ENCODE measurements at regions of chr9 and their contacts with region 1.

Region 1: DNA sequence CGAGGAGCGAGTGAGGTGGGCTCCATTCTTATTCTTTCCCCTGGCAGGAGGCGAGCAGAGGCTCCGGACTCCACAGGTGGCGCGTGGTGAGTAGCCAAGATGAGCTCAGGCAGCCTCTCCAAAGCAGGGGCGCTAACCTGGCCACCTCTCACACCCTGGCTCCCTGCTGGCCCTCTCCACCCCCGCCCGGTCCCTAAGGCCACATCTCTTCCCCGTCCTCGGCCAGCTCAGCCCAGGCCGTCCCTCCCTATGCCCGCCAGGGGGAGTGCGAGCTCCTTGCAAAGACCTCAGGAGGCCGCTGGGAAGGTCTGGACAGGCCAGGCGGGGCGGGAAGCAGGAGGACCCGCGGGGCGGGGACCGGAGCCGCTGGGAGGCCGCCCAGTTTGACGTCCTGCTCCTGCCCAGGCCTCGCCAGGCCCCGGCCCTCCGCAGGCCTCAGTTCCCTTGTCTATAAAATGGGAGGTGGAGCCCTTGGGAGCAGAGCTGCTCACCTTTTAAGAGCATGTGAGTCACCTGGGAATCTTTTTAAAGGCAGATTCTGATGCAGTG is 46.3 kb upstream of the GGTA1 start:
- DNase-seq: peak; percentile 94 to 99 (median 96)
- ATAC-seq: peak; percentile 97 to 98 (median 97)
- H3K4me3 ChIP-seq: peak overlapping the region in 2 of 4 donors; percentile 10 to 29
- H3K27ac ChIP-seq: no peak overlapping the region
- H3K4me1 ChIP-seq: peaks cover 0 to 7% (median 0%) of the 10 kb centered on the region in 3 donors
- H3K27me3 ChIP-seq: no peaks in the 10 kb centered on the region
- CTCF ChIP-seq: peak; percentile 92 to 95 (median 93)

Region 2: GRCh38 chr9:121483049-121483448 is 62.9 kb before region 1 on chr9:
- intact Hi-C with region 1: loop called in 1 of 3 experiments (anchors 10 kb)
- DNase-seq: no peak
- ATAC-seq: no peak
- H3K4me3 ChIP-seq: no peak overlapping the region
- H3K27ac ChIP-seq: no peak overlapping the region
- H3K4me1 ChIP-seq: no peaks in the 10 kb centered on the region
- H3K27me3 ChIP-seq: no peaks in the 10 kb centered on the region
- CTCF ChIP-seq: no peak

Region 3: GRCh38 chr9:121674952-121675351 is 129.0 kb after region 1 on chr9:
- intact Hi-C with region 1: loop called in 1 of 3 experiments (anchors 10 kb)
- DNase-seq: no peak
- ATAC-seq: no peak
- H3K4me3 ChIP-seq: no peak overlapping the region
- H3K27ac ChIP-seq: no peak overlapping the region
- H3K4me1 ChIP-seq: no peaks in the 10 kb centered on the region
- H3K27me3 ChIP-seq: no peaks in the 10 kb centered on the region
- CTCF ChIP-seq: no peak

Region 4: DNA sequence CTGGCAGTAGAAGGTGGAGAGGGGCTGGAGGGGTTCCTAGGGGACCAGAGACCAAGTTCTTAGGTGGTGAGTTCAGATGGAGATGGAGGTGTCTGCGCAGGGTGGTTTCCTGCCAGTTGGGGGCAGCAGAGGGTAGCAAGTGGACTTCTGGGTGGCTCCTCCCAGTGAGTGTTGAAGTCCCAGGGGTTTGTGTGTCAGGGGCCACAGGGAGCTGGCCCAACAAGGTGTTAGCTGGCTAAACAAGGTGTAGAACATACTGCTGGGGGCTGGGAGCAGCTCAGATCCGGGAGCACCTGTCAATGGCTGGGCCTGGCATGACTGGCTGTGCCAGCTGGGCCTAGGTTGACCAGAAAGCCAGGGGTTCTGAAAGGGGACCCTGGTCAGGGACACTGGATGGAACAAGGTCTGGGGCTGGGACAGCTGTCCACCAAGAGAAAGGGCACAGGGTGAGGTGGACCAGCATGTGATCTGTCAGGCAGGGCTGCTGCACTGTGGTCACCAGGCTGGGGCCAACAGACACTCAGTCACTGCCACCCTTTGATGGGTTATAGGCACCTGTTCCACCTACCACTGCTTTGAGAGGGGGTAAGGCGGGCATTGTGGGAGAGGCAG is 141.1 kb after region 1 on chr9:
- intact Hi-C with region 1: loop called in 1 of 3 experiments (anchors 5 kb)
- DNase-seq: peak in 5 of 6 donors; percentile 58 to 89 (median 79)
- ATAC-seq: peak; percentile 82 to 94 (median 89)
- H3K4me3 ChIP-seq: no peak overlapping the region
- H3K27ac ChIP-seq: no peak overlapping the region
- H3K4me1 ChIP-seq: no peaks in the 10 kb centered on the region
- H3K27me3 ChIP-seq: no peaks in the 10 kb centered on the region
- CTCF ChIP-seq: peak; percentile 71 to 84 (median 74)

Region 5: GRCh38 chr9:121992571-121993212 is 446.7 kb after region 1 on chr9:
- intact Hi-C with region 1: loop called in 2 of 3 experiments (anchors 5 to 10 kb)
- DNase-seq: peak in 4 of 6 donors; percentile 44 to 63 (median 48)
- ATAC-seq: peak; percentile 90 to 92 (median 90)
- H3K4me3 ChIP-seq: no peak overlapping the region
- H3K27ac ChIP-seq: no peak overlapping the region
- H3K4me1 ChIP-seq: peaks cover 7 to 14% (median 13%) of the 10 kb centered on the region in 3 donors
- H3K27me3 ChIP-seq: no peaks in the 10 kb centered on the region
- CTCF ChIP-seq: peak; percentile 79 to 93 (median 86)

Measured in pancreas (tissue), 10 donors.